ENCODE measurements at regions of chr3 and their contacts with region 1.

Region 1: GRCh38 chr3:125374996-125375941 is at the start of gene ZNF148:
- DNase-seq: peak; percentile 89 to 95
- ATAC-seq: peak; percentile 83 to 97 (median 89)
- H3K4me3 ChIP-seq: peak within 1 kb of the TSS; percentile 97
- H3K4me3 Mint-ChIP-seq: peak within 1 kb of the TSS; percentile 99
- H3K27ac ChIP-seq: peak within 1 kb of the TSS; percentile 97
- H3K27ac Mint-ChIP-seq: peak within 1 kb of the TSS; percentile 98 to 99
- H3K4me1 ChIP-seq: peaks cover 21% of the 10 kb centered on the region
- H3K4me1 Mint-ChIP-seq: peaks cover 33 to 40% of the 10 kb centered on the region in 2 donors
- H3K27me3 ChIP-seq: no peaks in the 10 kb centered on the region
- H3K27me3 Mint-ChIP-seq: peaks cover 0 to 3% of the 10 kb centered on the region in 2 donors
- CTCF ChIP-seq: no peak
- total RNA-seq, gene ZNF148: 61.1 to 72.5 (median 62.8) TPM

Region 2: DNA sequence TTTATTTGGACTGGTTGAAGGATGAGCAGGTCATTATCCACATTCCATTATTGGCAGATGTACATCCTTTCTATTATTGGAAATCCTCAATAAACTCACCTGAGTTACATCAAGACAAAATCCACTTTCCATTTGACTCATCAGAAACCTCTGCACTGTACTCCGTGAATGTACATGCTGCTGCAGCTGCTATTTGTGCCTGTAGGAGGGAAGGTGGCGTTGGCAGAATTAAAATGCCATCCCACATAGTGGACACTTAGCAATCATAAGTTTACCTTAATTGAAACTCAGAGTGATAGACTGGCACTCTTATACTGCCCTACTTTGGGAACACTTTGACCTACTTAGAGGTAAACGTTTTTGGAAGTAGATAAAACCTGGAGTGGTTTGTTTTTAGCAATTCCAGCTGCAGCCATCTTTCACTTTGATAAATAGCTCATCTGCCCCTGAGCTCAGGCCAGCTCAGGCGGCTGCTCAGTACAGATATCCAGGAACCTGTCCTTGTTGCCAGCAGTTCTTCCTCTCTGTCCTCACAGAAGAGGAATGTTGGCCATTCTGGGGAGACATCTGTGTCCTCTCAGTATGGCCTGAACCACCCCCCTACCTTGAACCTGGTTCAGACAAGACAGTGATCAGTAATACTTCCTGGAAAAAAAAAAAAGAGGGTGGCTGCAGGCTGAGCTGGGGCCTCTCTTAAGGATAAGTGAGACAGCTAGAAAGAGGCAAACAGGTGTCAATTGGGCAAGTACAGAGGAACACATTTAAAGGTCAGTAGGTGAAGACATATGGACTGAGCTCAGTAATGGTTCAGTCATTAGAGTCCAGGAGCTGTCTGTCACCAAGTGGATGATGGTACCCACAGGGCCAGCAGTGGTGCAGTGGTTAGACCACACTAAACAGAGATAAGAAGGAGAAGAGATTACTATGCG is 798.4 kb before region 1 on chr3:
- intact Hi-C with region 1: no loop called
- DNase-seq: no peak
- ATAC-seq: no peak
- H3K4me3 ChIP-seq: no peak overlapping the region
- H3K4me3 Mint-ChIP-seq: no peak overlapping the region
- H3K27ac ChIP-seq: no peak overlapping the region
- H3K27ac Mint-ChIP-seq: no peak overlapping the region
- H3K4me1 ChIP-seq: no peaks in the 10 kb centered on the region
- H3K4me1 Mint-ChIP-seq: peaks cover 0 to 5% of the 10 kb centered on the region in 2 donors
- H3K27me3 ChIP-seq: no peaks in the 10 kb centered on the region
- H3K27me3 Mint-ChIP-seq: peaks cover 3 to 7% of the 10 kb centered on the region in 2 donors
- CTCF ChIP-seq: no peak

Region 3: DNA sequence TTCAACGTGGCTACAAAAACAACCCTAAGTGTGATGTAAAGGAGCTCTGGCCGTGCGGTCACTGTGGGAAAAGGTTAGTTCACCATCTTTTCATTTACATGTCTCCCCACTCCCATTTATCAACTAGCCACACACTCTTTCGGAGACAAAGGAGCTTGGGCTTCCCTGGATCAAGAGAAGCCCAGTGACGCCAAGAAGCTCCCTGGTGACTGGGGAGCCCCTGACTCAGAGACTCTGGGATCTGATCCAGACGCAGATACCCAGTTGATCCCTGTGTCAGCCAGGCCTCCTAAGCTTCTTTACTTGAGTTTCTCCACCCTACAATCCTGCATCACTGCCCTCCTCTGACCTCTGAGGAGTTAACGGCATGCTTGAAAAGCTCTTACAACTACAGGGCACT is 363.3 kb before region 1 on chr3:
- intact Hi-C with region 1: loop called (anchors 10 kb)
- DNase-seq: no peak
- ATAC-seq: no peak
- H3K4me3 ChIP-seq: no peak overlapping the region
- H3K4me3 Mint-ChIP-seq: no peak overlapping the region
- H3K27ac ChIP-seq: no peak overlapping the region
- H3K27ac Mint-ChIP-seq: peak overlapping the region; percentile 3 to 48
- H3K4me1 ChIP-seq: peaks cover 25% of the 10 kb centered on the region
- H3K4me1 Mint-ChIP-seq: peaks cover 57 to 65% of the 10 kb centered on the region in 2 donors
- H3K27me3 ChIP-seq: no peaks in the 10 kb centered on the region
- H3K27me3 Mint-ChIP-seq: no peaks in the 10 kb centered on the region
- CTCF ChIP-seq: no peak

Region 4: GRCh38 chr3:125098611-125099291 is 276.5 kb before region 1 on chr3:
- intact Hi-C with region 1: no loop called
- DNase-seq: no peak
- ATAC-seq: no peak
- H3K4me3 ChIP-seq: no peak overlapping the region
- H3K4me3 Mint-ChIP-seq: no peak overlapping the region
- H3K27ac ChIP-seq: no peak overlapping the region
- H3K27ac Mint-ChIP-seq: no peak overlapping the region
- H3K4me1 ChIP-seq: no peaks in the 10 kb centered on the region
- H3K4me1 Mint-ChIP-seq: no peaks in the 10 kb centered on the region
- H3K27me3 ChIP-seq: no peaks in the 10 kb centered on the region
- H3K27me3 Mint-ChIP-seq: peaks cover 0 to 7% of the 10 kb centered on the region in 2 donors
- CTCF ChIP-seq: no peak

Region 5: DNA sequence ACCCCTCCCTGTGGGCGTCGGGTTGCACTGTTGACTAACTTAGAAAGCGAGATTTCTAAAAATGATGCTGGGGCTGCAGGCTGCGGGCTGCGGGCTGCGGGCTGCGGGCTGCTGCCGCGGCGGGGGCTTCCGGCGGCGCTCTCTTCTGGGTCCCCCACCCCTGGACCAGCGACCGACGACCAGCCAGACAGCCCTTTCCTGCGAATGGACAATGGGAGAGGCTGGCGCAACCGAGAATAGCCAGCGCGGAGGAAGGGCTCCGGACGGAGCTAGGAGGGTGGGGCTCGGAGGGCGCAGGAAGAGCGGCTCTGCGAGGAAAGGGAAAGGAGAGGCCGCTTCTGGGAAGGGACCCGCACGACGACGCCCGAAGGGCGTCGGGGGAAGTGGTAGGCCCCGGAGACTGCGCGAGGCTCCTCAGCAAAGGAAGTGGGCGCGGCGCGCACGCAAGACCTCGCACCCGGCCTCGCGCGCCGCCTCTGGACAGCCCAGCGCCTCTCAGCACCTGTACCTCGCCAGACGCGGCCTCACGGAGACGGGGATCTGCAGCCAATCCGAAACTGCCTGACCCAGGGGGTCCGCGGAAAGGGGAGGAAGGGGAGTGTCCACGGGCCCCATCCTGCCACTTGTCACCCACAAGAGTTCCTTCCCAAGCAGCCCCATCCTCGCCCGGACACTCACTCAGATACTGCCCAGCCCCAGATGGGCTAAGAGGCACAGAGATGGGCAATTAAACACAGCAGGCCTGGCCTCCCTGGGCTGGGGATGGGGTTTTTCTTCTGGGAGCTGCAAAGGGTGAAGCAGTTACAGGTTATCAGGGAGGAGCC is 233.5 kb before region 1 on chr3:
- intact Hi-C with region 1: loop called (anchors 10 kb)
- DNase-seq: peak; percentile 61 to 86
- ATAC-seq: peak; percentile 87 to 91 (median 91)
- H3K4me3 ChIP-seq: peak overlapping the region; percentile 29
- H3K4me3 Mint-ChIP-seq: peak overlapping the region; percentile 86
- H3K27ac ChIP-seq: peak overlapping the region; percentile 59
- H3K27ac Mint-ChIP-seq: peak overlapping the region; percentile 84 to 95
- H3K4me1 ChIP-seq: peaks cover 57% of the 10 kb centered on the region
- H3K4me1 Mint-ChIP-seq: peaks cover 46 to 66% of the 10 kb centered on the region in 2 donors
- H3K27me3 ChIP-seq: no peaks in the 10 kb centered on the region
- H3K27me3 Mint-ChIP-seq: no peaks in the 10 kb centered on the region
- CTCF ChIP-seq: peak; percentile 6

Region 6: GRCh38 chr3:125310623-125311081 is 64.6 kb before region 1 on chr3:
- intact Hi-C with region 1: loop called (anchors 2 kb)
- DNase-seq: peak; percentile 47 to 67
- ATAC-seq: peak; percentile 92 to 94 (median 92)
- H3K4me3 ChIP-seq: peak overlapping the region; percentile 29
- H3K4me3 Mint-ChIP-seq: peak overlapping the region; percentile 92
- H3K27ac ChIP-seq: peak overlapping the region; percentile 78
- H3K27ac Mint-ChIP-seq: peak overlapping the region; percentile 90 to 98
- H3K4me1 ChIP-seq: peaks cover 8% of the 10 kb centered on the region
- H3K4me1 Mint-ChIP-seq: peaks cover 41 to 44% of the 10 kb centered on the region in 2 donors
- H3K27me3 ChIP-seq: no peaks in the 10 kb centered on the region
- H3K27me3 Mint-ChIP-seq: no peaks in the 10 kb centered on the region
- CTCF ChIP-seq: no peak

Region 7: GRCh38 chr3:125322166-125322565 is 53.1 kb before region 1 on chr3:
- intact Hi-C with region 1: no loop called
- DNase-seq: no peak
- ATAC-seq: no peak
- H3K4me3 ChIP-seq: no peak overlapping the region
- H3K4me3 Mint-ChIP-seq: no peak overlapping the region
- H3K27ac ChIP-seq: no peak overlapping the region
- H3K27ac Mint-ChIP-seq: no peak overlapping the region
- H3K4me1 ChIP-seq: no peaks in the 10 kb centered on the region
- H3K4me1 Mint-ChIP-seq: peaks cover 0 to 17% of the 10 kb centered on the region in 2 donors
- H3K27me3 ChIP-seq: no peaks in the 10 kb centered on the region
- H3K27me3 Mint-ChIP-seq: no peaks in the 10 kb centered on the region
- CTCF ChIP-seq: no peak

Region 8: GRCh38 chr3:125594581-125595011 is 219.3 kb after region 1 on chr3:
- intact Hi-C with region 1: loop called (anchors 10 kb)
- DNase-seq: no peak
- ATAC-seq: no peak
- H3K4me3 ChIP-seq: peak overlapping the region; percentile 78
- H3K4me3 Mint-ChIP-seq: peak overlapping the region; percentile 95
- H3K27ac ChIP-seq: peak overlapping the region; percentile 65
- H3K27ac Mint-ChIP-seq: peak overlapping the region; percentile 86 to 87
- H3K4me1 ChIP-seq: peaks cover 37% of the 10 kb centered on the region
- H3K4me1 Mint-ChIP-seq: peaks cover 30 to 44% of the 10 kb centered on the region in 2 donors
- H3K27me3 ChIP-seq: no peaks in the 10 kb centered on the region
- H3K27me3 Mint-ChIP-seq: no peaks in the 10 kb centered on the region
- CTCF ChIP-seq: no peak